ENCODE measurements at regions of chr1 and their contacts with region 1.

Region 1: DNA sequence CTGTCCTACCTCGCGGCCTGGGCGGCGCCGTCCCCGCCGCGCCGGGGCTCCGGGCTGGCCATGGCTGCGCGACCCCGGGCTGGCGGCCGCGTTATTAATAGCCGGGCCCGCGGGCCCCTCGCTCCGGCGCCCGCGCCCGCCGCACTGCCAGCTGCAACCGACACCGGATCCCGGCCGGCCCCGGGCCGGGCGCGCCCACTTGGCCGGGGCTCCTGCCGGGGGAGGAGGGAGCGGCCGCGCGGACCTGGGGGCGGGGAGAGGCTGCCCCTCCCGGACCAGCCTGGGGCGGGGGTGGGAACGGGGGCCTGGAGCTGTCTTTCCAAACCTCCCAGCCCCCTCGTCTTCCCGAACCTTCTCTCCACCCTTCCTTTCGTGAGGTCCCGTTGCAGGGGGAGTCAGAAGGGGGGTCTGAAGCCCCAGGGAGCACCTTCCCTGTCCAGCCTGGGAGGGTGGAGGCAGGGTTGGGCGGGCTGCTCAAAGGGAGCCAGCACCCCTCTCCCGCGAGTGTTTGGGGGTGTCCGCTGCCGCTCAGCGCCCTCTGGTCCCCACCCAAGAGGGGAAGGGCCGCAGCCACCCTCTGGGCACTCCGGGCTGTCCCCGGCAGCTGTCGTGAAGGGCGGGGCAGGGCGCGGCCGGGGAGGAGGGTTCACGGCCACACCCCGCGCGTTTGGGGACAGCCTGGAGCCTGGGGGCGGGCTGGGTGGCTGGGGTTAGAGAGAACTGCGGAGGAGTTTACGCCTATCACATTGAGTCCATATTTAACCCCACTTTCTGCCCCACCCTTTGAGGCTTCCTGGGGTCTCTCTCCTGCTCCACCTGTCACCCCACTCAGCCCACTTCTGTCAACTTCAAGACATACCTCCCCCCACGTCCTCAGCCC is at the start of gene SYNC:
- DNase-seq: peak; percentile 77 to 93
- ATAC-seq: peak; percentile 83
- H3K4me3 ChIP-seq: peak within 1 kb of the TSS; percentile 84 to 95
- H3K27ac ChIP-seq: peak within 1 kb of the TSS; percentile 98 to 99
- H3K4me1 ChIP-seq: peaks cover 0 to 4% of the 10 kb centered on the region in 2 donors
- H3K27me3 ChIP-seq: no peaks in the 10 kb centered on the region
- total RNA-seq, gene SYNC: 37.5 to 89.8 TPM

Region 2: DNA sequence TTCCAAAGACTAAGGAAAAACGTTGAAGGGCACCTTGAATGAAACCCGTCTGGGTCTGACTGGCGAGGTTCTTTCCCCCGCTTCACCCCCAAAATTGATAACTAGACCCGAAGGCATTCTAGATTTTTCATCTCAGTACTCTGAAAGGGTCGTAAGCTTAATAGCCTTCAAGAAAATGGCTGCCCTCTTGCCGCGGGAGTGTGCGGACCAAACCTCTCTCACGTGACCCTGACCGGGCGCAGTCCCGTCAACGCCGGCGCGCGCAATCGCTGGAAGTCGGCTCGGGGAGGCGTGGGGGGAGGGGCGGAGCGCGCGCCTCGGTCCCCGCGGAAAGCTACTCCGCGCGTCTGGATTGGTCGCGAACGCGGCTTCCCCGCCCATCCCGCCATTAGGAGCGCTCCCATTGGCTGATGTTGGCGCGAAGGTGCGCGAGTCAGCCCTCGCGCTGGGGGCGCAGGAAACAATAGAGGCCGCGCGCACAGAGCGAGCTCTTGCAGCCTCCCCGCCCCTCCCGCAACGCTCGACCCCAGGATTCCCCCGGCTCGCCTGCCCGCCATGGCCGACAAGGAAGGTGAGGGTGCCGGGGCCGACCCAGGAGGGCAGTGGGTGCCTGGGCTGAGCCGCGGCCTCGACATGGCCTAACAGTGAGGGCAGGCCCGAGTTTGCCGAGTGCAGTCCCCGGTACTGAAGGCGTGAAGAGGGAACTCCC is 51.9 kb before region 1 on chr1 and contains the start of gene RBBP4:
- intact Hi-C with region 1: loop called in 1 of 2 experiments (anchors 2 kb)
- DNase-seq: peak; percentile 99
- ATAC-seq: peak; percentile 99
- H3K4me3 ChIP-seq: peak within 1 kb of the TSS; percentile 49 to 82
- H3K27ac ChIP-seq: peak within 1 kb of the TSS; percentile 78 to 96
- H3K4me1 ChIP-seq: peaks cover 0 to 4% of the 10 kb centered on the region in 2 donors
- H3K27me3 ChIP-seq: no peaks in the 10 kb centered on the region
- total RNA-seq, gene RBBP4: 106 to 114 TPM

Region 3: DNA sequence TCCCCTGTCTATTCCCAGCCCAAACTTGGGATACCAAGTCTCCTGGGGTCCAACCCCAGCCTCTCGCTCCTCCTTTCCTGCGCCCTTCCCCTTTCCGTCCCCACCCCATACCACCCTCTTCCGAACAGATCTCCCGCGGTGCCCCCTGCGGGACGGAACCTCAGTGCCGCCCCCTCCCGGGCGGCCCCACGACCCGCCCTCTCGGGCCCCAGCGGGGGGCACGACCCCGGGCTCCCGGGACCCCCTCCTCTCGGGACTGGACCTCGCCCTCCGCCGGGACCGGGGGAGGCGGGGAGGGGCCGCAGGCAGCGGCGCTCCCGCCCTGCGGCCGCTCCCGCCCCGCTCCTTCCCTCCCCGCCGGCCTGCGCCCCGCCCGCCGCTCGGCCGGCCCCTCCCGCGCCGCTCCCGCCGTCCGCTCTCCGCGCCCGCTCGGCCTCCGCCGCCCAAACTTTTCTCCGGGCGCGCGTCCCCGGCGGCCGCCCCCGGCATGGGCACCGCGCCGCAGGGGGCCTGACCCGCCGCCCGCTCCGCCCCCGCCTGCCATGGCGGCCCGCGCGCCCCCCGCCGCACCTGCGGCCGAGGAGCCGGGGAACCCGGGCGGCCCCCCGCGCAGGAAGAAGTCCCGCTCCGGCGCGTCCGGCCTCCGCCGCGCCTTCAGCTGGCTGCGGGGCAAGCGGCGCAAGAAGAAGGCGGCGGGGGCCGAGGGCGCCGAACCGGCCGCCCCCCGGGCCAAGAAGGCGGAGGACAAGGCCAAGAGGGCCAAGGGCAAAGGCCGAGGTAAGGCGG is 38.8 kb after region 1 on chr1:
- intact Hi-C with region 1: loop called in 1 of 2 experiments (anchors 5 kb)
- DNase-seq: peak in 1 of 2 donors; percentile 79
- ATAC-seq: peak; percentile 50
- H3K4me3 ChIP-seq: peak overlapping the region; percentile 71 to 87
- H3K27ac ChIP-seq: peak overlapping the region in 1 of 2 donors; percentile 25
- H3K4me1 ChIP-seq: no peaks in the 10 kb centered on the region
- H3K27me3 ChIP-seq: no peaks in the 10 kb centered on the region

Region 4: GRCh38 chr1:32817159-32817814 is 114.4 kb after region 1 on chr1 and contains the starts of genes S100PBP and YARS1:
- intact Hi-C with region 1: loop called (anchors 5 kb)
- DNase-seq: peak; percentile 100
- ATAC-seq: peak; percentile 99
- H3K4me3 ChIP-seq: peak within 1 kb of the TSS; percentile 52 to 84
- H3K27ac ChIP-seq: peak within 1 kb of the TSS; percentile 71 to 86
- H3K4me1 ChIP-seq: peaks cover 0 to 8% of the 10 kb centered on the region in 2 donors
- H3K27me3 ChIP-seq: no peaks in the 10 kb centered on the region
- total RNA-seq, gene S100PBP: 37.4 to 60.7 TPM
- total RNA-seq, gene YARS1: 55.2 to 76.1 TPM

Region 5: GRCh38 chr1:33080885-33081553 is 378.2 kb after region 1 on chr1 and contains the start of gene AZIN2:
- intact Hi-C with region 1: loop called (anchors 5 to 10 kb)
- DNase-seq: peak; percentile 98 to 100
- ATAC-seq: peak; percentile 98
- H3K4me3 ChIP-seq: peak within 1 kb of the TSS; percentile 46 to 51
- H3K27ac ChIP-seq: no peak within 1 kb of the TSS
- H3K4me1 ChIP-seq: no peaks in the 10 kb centered on the region
- H3K27me3 ChIP-seq: no peaks in the 10 kb centered on the region
- total RNA-seq, gene AZIN2: 3.9 to 14.4 TPM

Region 6: GRCh38 chr1:33512226-33513011 is 809.6 kb after region 1 on chr1:
- intact Hi-C with region 1: no loop called
- DNase-seq: no peak
- ATAC-seq: no peak
- H3K4me3 ChIP-seq: no peak overlapping the region
- H3K27ac ChIP-seq: no peak overlapping the region
- H3K4me1 ChIP-seq: no peaks in the 10 kb centered on the region
- H3K27me3 ChIP-seq: no peaks in the 10 kb centered on the region